Endothelial cell of umbilical vein (primary cell): ENCODE measurements at regions of chr7 and their contacts with region 1.

Region 1: DNA sequence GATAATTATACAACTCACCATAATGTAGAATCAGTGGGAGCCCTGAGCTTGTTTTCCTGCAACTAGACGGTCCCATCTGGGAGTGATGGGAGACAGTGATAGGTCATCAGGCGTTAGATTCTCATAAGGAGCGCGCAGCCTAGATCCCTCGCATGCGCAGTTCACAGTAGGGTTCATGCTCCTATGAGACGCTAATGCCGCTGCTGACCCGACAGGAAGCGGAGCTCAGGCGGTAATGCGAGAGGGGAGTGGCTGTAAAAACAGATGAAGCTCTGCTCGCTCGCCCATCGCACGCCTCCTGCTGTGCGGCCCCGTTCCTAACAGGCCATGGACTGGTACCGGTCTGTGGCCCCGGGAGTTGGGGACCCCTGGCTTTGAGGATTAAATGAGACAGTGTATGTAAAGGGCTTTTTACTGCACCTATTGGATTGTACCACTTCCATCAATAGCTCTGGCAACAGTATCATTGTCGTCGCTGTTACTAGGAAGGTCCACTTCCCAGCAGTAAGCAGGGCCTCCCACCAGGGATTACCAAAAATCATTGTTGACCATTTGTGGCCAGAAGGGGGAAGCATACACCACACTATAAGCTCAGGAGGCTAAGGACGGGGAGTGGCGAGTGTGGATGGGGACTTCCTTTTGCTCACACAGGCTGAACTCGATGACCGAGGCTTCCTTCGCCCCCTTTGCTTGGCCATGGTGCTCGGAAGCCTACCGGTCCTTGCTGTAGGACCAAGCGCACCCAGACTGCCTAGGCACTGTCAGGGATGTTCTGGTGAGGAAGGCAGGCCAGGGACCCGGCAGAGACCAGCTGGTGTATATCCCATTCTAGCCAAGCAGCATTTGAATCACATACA is 26.4 kb downstream of the AKR1B1 start:
- DNase-seq: peak; percentile 93
- H3K4me3 ChIP-seq: peak overlapping the region in 2 of 3 experiments; percentile 31 to 44
- H3K27ac ChIP-seq: peak overlapping the region; percentile 45
- H3K4me1 ChIP-seq: peaks cover 9% of the 10 kb centered on the region
- H3K27me3 ChIP-seq: no peaks in the 10 kb centered on the region
- CTCF ChIP-seq: peak; percentile 41 to 67
- POLR2A ChIP-seq: peak; percentile 32

Region 2: DNA sequence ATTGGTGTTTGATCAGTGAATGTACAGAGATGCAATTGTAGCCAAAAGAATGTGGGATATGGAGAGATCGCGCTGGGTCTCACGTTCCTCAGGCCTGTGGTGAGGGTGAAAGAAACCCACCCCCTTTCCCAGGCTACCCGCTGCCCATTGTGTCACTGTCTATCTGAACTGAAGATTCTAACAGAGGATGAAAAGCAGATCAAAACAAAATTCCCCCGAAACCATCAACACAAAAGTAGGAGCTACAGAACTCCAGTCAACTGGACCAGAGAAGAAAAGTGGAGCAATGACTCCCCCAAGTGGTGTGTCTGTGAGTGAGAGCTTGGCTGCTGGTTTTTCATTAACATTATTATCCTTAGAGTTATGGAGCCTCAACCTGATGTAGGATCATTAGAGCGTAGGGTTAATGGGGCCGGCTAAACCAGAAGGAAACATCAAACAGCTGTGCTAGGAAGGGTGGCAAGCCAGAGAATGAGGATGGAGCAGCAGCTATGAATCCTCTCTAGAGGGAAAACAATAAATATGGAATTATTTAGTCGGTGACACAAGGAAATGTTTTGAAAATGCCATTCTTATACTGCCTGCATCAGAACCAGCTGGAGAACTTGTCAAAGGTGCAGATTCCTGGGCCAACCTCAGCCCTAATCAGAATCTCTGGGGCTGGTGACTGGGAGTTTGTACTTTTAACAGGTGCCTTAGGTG is 11.9 kb before region 1 on chr7:
- CTCF ChIA-PET with region 1: interaction called, 18 read pairs
- POLR2A ChIA-PET with region 1: no interaction called
- dilution Hi-C with region 1: no loop called
- intact Hi-C with region 1: no loop called
- DNase-seq: peak; percentile 62
- H3K4me3 ChIP-seq: no peak overlapping the region
- H3K27ac ChIP-seq: no peak overlapping the region
- H3K4me1 ChIP-seq: peaks cover 10% of the 10 kb centered on the region
- H3K27me3 ChIP-seq: no peaks in the 10 kb centered on the region
- CTCF ChIP-seq: peak; percentile 57 to 62
- POLR2A ChIP-seq: no peak

Region 3: GRCh38 chr7:134458806-134459698 is 26.5 kb after region 1 on chr7 and contains the start of gene AKR1B1:
- CTCF ChIA-PET with region 1: interaction called, 36 read pairs
- POLR2A ChIA-PET with region 1: no interaction called
- dilution Hi-C with region 1: no loop called
- intact Hi-C with region 1: loop called (anchors 1 kb)
- DNase-seq: peak; percentile 89
- H3K4me3 ChIP-seq: peak within 1 kb of the TSS; percentile 42 to 81 (median 57)
- H3K27ac ChIP-seq: peak within 1 kb of the TSS; percentile 5
- H3K4me1 ChIP-seq: peaks cover 20% of the 10 kb centered on the region
- H3K27me3 ChIP-seq: no peaks in the 10 kb centered on the region
- CTCF ChIP-seq: peak; percentile 71 to 72
- POLR2A ChIP-seq: no peak
- total RNA-seq, gene AKR1B1: 159 and 160 TPM in 2 replicates

Region 4: DNA sequence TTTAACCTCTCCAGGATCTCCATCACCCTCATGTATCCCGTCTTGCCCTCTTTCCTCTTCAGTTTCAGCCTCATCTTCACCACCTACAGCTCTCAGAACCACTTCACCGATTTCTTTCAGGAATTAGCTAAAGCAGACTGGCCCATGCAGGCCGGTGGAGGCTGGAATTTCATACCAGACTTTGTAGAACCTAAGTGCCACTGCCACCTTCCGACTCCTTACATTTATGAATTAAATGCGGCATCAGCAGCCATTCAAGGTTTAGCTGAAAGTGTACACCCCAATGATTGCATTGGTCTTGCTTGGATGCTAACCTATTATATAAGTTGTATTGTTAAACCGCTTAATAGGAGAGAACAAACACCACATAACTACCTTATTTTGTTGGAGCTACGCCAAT is 59.4 kb after region 1 on chr7:
- CTCF ChIA-PET with region 1: no interaction called
- POLR2A ChIA-PET with region 1: no interaction called
- dilution Hi-C with region 1: no loop called
- intact Hi-C with region 1: no loop called
- DNase-seq: no peak
- H3K4me3 ChIP-seq: no peak overlapping the region
- H3K27ac ChIP-seq: no peak overlapping the region
- H3K4me1 ChIP-seq: no peaks in the 10 kb centered on the region
- H3K27me3 ChIP-seq: no peaks in the 10 kb centered on the region
- CTCF ChIP-seq: no peak
- POLR2A ChIP-seq: no peak

Region 5: GRCh38 chr7:134514663-134515062 is 82.1 kb after region 1 on chr7:
- CTCF ChIA-PET with region 1: interaction called, 224 read pairs
- POLR2A ChIA-PET with region 1: no interaction called
- dilution Hi-C with region 1: no loop called
- intact Hi-C with region 1: loop called (anchors 1 kb)
- DNase-seq: peak; percentile 85
- H3K4me3 ChIP-seq: no peak overlapping the region
- H3K27ac ChIP-seq: no peak overlapping the region
- H3K4me1 ChIP-seq: peaks cover 13% of the 10 kb centered on the region
- H3K27me3 ChIP-seq: no peaks in the 10 kb centered on the region
- CTCF ChIP-seq: peak; percentile 66 to 72
- POLR2A ChIP-seq: no peak

Region 6: DNA sequence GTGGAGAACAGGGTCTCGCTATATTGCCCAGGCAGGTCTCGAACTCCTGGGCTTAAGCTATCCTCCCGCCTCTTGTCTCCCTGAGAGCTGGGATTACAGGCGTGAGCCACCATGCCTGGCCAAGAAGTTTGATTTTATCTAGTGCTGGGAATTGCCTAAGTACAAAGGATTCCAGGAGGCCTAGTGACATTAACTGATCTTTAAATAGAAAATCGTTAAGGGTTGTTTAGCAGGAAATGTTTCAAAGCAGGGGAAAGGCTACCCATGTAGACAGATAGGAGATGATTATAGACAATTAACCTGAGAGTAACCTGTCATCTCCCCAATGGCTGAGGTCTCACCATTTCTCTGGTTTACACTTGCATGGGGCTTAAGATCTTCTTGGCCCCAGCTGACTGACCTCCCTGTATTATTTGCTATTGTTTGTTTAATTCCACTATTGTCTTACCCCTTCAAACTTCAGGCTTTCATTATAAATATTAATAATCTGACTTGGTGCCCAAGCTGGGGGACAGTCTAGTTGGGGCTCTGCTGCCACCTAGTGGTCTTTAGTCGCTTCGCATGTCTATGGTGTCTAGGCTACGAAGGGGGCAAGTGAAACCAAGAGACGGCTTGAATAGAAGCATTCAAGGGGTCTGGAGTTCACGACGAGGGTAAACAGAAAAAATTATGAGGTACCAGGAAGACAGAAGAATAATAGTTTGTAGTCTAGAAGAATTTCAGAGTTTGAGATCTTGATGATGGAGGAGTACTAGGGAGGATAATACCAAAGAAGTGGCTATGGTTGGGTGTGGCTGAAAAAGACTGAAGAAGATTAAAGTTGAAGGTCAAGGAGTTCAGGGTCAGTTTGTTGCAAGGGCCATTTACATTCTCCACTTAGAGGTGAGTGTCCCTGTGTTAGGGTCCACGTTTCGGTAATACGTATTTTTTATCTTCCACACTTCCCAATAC is 173.7 kb after region 1 on chr7:
- CTCF ChIA-PET with region 1: interaction called, 101 read pairs
- POLR2A ChIA-PET with region 1: no interaction called
- dilution Hi-C with region 1: no loop called
- intact Hi-C with region 1: loop called (anchors 1 kb)
- DNase-seq: peak; percentile 80
- H3K4me3 ChIP-seq: no peak overlapping the region
- H3K27ac ChIP-seq: no peak overlapping the region
- H3K4me1 ChIP-seq: peaks cover 10% of the 10 kb centered on the region
- H3K27me3 ChIP-seq: no peaks in the 10 kb centered on the region
- CTCF ChIP-seq: peak; percentile 81 to 86
- POLR2A ChIP-seq: no peak

Region 7: DNA sequence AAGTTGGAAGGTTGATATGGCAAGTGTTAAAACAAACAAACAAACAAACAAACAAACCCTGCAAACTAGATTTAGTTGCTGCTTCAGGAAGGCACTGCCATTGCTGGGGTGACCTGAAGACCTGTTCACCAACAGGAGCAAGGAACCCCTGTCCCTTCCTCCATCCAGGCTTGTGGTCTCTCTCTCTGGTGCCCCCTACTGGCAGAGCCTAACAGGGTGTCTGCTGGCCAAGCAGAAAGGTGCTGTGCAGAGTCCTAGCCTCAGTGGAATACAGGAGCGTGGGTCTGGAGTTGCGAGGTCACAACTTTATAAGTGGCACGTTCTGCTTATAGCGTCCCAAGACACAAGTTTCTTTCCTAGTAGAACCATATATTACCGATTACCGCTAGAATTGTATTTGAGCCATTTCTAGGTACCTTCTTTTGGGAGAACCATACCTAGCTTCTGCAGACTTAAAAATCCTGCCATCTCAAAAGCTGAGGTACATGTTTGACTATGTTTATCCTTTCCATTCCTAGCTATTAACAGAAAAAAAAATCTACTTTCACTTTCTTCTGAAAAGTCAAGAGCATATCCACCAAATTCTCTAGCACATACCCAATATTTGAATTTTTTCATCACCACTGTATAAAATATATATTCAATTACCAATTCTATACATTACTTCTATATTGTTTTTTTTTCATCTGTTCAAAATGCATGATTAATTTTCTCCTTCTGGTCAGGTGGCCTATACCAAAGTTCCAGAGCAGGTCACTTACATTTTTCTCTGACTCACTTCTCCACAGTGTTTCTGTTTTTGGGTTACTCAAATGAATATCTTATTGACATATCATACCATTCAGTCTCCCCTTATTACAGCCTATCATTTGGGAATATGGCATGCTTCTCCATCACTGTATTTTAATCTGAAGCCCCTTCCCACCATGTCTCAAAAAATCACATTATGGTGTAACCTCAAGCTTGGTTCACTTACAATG is 317.8 kb after region 1 on chr7:
- CTCF ChIA-PET with region 1: interaction called, 7 read pairs
- POLR2A ChIA-PET with region 1: no interaction called
- dilution Hi-C with region 1: no loop called
- intact Hi-C with region 1: loop called (anchors 5 kb)
- DNase-seq: peak; percentile 51
- H3K4me3 ChIP-seq: no peak overlapping the region
- H3K27ac ChIP-seq: no peak overlapping the region
- H3K4me1 ChIP-seq: no peaks in the 10 kb centered on the region
- H3K27me3 ChIP-seq: no peaks in the 10 kb centered on the region
- CTCF ChIP-seq: peak; percentile 68 to 76
- POLR2A ChIP-seq: no peak